Activated CD4-positive, alpha-beta memory T cell treated with anti-CD3 and anti-CD28 coated beads for 36 hours (primary cell): ENCODE measurements at regions of chr19 and their contacts with region 1.

Region 1: GRCh38 chr19:8005534-8006256 is at the start of gene ELAVL1:
- DNase-seq: peak; percentile 92
- H3K4me3 Mint-ChIP-seq: peak within 1 kb of the TSS; percentile 93
- H3K27ac Mint-ChIP-seq: peak within 1 kb of the TSS; percentile 72
- H3K4me1 Mint-ChIP-seq: peaks cover 32% of the 10 kb centered on the region
- H3K27me3 Mint-ChIP-seq: no peaks in the 10 kb centered on the region
- total RNA-seq, gene ELAVL1: 143 to 145 TPM

Region 2: DNA sequence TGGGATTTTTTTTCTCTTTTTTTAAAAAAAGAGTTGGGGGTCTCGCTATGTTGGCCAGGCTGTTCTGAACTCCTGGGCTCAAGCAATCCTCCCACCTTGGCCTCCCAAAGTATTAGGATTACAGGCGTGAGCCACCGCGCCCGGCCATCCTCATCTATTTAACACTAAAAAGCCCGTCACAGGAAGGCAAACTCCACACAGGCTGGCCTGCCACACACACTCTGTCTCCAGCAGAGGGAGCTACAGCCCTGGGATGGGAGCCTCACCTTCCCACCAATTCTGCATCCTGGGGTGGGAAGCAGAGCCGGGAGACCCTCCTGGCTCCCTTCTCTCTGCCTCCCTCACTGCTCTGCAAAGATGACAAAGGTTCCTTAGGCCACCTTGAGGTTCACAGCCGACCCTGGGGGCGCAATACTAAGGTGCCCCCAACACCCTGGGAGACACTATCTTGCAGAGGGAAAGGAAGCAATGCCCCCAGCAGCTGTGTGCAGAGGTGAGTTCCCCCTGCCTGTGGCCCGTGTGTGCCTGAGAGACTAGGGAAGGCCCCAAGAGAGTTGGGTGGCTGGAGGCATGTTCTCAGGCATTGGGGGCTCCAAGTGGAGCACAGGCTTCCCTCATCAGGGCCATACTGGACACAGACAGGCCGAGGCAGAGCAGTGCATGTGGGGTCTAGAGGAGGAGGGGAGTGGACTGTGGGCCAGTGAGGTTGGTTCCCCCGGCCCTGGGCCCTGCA is 34.8 kb before region 1 on chr19:
- CTCF ChIA-PET with region 1: interaction called, 20 read pairs
- POLR2A ChIA-PET with region 1: no interaction called
- intact Hi-C with region 1: no loop called
- DNase-seq: peak; percentile 36
- H3K4me3 Mint-ChIP-seq: no peak overlapping the region
- H3K27ac Mint-ChIP-seq: no peak overlapping the region
- H3K4me1 Mint-ChIP-seq: no peaks in the 10 kb centered on the region
- H3K27me3 Mint-ChIP-seq: no peaks in the 10 kb centered on the region

Region 3: GRCh38 chr19:7989071-7989575 is 16.6 kb before region 1 on chr19:
- CTCF ChIA-PET with region 1: interaction called, 12 read pairs
- POLR2A ChIA-PET with region 1: interaction called, 3 read pairs
- intact Hi-C with region 1: no loop called
- DNase-seq: no peak
- H3K4me3 Mint-ChIP-seq: no peak overlapping the region
- H3K27ac Mint-ChIP-seq: no peak overlapping the region
- H3K4me1 Mint-ChIP-seq: peaks cover 6% of the 10 kb centered on the region
- H3K27me3 Mint-ChIP-seq: no peaks in the 10 kb centered on the region

Region 4: GRCh38 chr19:8075158-8076074 is 69.7 kb after region 1 on chr19:
- CTCF ChIA-PET with region 1: no interaction called
- POLR2A ChIA-PET with region 1: no interaction called
- intact Hi-C with region 1: no loop called
- DNase-seq: no peak
- H3K4me3 Mint-ChIP-seq: no peak overlapping the region
- H3K27ac Mint-ChIP-seq: no peak overlapping the region
- H3K4me1 Mint-ChIP-seq: no peaks in the 10 kb centered on the region
- H3K27me3 Mint-ChIP-seq: no peaks in the 10 kb centered on the region